T-cell (primary cell): ENCODE measurements at regions of chr3 and their contacts with region 1.

Region 1: GRCh38 chr3:48926425-48927392 is 8.1 kb downstream of the ARIH2 start:
- DNase-seq: no peak
- ATAC-seq: peak in 1 of 4 experiments; percentile 20
- H3K4me3 ChIP-seq: no peak overlapping the region
- H3K4me3 Mint-ChIP-seq: peak overlapping the region in 1 of 3 donors; percentile 20
- H3K27ac ChIP-seq: peak overlapping the region; percentile 0
- H3K27ac Mint-ChIP-seq: peak overlapping the region; percentile 44 to 49
- H3K4me1 ChIP-seq: peaks cover 21 to 29% of the 10 kb centered on the region in 2 experiments
- H3K4me1 Mint-ChIP-seq: peaks cover 60 to 61% (median 60%) of the 10 kb centered on the region in 3 donors
- H3K27me3 ChIP-seq: no peaks in the 10 kb centered on the region
- H3K27me3 Mint-ChIP-seq: no peaks in the 10 kb centered on the region

Region 2: GRCh38 chr3:48784426-48785120 is 142.1 kb before region 1 on chr3:
- CTCF ChIA-PET with region 1: no interaction called
- POLR2A ChIA-PET with region 1: no interaction called
- DNase-seq: no peak
- ATAC-seq: no peak
- H3K4me3 ChIP-seq: no peak overlapping the region
- H3K4me3 Mint-ChIP-seq: no peak overlapping the region
- H3K27ac ChIP-seq: no peak overlapping the region
- H3K27ac Mint-ChIP-seq: no peak overlapping the region
- H3K4me1 ChIP-seq: peaks cover 5 to 11% of the 10 kb centered on the region in 2 experiments
- H3K4me1 Mint-ChIP-seq: peaks cover 13 to 16% (median 14%) of the 10 kb centered on the region in 3 donors
- H3K27me3 ChIP-seq: no peaks in the 10 kb centered on the region
- H3K27me3 Mint-ChIP-seq: no peaks in the 10 kb centered on the region

Region 3: DNA sequence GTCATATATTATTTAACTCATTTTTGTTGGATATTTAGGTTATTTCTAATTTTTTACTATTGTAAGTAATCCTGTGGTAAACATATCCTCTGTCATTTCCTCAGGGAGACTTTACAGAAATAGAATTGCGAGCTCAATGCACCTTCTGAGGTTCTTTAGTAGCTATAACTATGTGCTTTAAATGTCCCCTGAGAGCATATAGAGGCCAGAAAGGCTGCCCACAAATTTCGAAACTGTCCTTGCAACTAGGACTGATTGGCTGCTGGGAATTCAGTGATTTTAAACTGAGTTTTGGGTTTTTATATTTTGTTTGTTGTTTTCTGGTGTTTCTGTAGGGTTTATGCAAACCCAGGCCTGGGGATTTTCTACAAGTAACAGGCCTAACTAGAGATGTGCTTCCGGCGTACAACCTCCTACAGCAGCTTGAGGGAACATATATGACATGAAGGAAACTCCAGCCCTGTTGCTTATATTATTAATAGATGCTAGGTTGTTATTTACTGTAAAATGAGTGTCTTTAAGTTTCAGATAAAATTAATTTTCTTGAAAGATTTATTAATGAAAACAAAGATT is 34.2 kb after region 1 on chr3:
- CTCF ChIA-PET with region 1: no interaction called
- POLR2A ChIA-PET with region 1: interaction called in 1 of 2 experiments, 15 read pairs
- DNase-seq: no peak
- ATAC-seq: no peak
- H3K4me3 ChIP-seq: no peak overlapping the region
- H3K4me3 Mint-ChIP-seq: no peak overlapping the region
- H3K27ac ChIP-seq: no peak overlapping the region
- H3K27ac Mint-ChIP-seq: peak overlapping the region in 1 of 2 donors; percentile 16
- H3K4me1 ChIP-seq: no peaks in the 10 kb centered on the region
- H3K4me1 Mint-ChIP-seq: peaks cover 3 to 7% (median 5%) of the 10 kb centered on the region in 3 donors
- H3K27me3 ChIP-seq: no peaks in the 10 kb centered on the region
- H3K27me3 Mint-ChIP-seq: no peaks in the 10 kb centered on the region